AG04449 (cell line): ENCODE measurements at regions of chr10 and their contacts with region 1.

Region 1: DNA sequence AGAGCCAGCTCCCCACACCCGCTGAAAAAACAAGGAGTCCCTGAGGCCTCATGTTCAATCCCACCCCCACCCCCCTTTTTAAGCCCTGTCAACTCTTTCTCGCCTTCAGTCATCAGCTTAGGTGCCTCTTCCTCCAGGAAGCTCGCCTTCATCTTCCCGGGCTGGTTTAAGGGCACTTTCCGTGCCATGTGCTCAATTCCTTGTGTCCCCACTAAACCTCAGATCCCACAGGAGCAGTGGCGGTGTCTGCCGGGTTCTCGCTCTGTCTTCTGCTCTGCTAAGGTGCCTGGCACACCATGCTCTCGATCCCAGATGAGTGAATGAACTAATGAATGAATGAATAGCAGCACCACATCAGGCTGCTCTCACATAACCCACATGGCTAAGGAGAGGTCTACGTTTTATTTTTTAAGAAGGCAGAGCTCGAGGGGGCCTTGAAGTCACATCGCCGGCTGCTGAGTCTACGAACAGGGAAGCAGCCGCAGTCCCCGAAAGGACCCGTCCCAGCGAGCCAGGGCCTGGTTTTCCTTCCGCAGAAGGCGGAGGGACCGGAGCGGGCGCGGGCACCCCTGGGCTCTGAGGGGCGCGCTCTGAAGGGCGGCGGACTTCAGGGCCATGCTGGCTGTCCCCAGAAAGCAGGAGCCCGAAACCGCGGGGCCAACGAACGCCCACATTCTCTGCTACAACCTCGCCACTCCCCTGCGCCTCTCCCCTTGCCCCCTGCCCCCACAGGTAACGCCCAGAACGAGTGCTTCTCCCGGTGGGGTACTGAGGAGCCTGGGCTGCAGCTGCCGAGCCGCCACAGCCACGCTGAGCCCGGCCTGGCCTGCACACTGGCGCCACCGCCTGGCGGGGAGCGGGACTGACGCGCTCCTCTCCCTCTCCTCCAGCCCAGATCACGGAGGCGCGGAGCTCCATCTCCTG is 73.4 kb upstream of the KCNMA1 start:
- DNase-seq: no peak
- H3K4me3 ChIP-seq: peak overlapping the region; percentile 52
- CTCF ChIP-seq: peak; percentile 100

Region 2: GRCh38 chr10:77428691-77429395 is 282.2 kb before region 1 on chr10:
- CTCF ChIA-PET with region 1: interaction called, 10 read pairs
- POLR2A ChIA-PET with region 1: no interaction called
- DNase-seq: peak; percentile 51
- H3K4me3 ChIP-seq: no peak overlapping the region
- CTCF ChIP-seq: peak; percentile 87

Region 3: GRCh38 chr10:77661100-77661499 is 49.9 kb before region 1 on chr10:
- CTCF ChIA-PET with region 1: interaction called, 13 read pairs
- POLR2A ChIA-PET with region 1: no interaction called
- DNase-seq: no peak
- H3K4me3 ChIP-seq: no peak overlapping the region
- CTCF ChIP-seq: no peak

Region 4: GRCh38 chr10:77692782-77693181 is 18.2 kb before region 1 on chr10:
- CTCF ChIA-PET with region 1: interaction called, 146 read pairs
- POLR2A ChIA-PET with region 1: no interaction called
- DNase-seq: peak; percentile 38
- H3K4me3 ChIP-seq: no peak overlapping the region
- CTCF ChIP-seq: peak; percentile 5

Region 5: DNA sequence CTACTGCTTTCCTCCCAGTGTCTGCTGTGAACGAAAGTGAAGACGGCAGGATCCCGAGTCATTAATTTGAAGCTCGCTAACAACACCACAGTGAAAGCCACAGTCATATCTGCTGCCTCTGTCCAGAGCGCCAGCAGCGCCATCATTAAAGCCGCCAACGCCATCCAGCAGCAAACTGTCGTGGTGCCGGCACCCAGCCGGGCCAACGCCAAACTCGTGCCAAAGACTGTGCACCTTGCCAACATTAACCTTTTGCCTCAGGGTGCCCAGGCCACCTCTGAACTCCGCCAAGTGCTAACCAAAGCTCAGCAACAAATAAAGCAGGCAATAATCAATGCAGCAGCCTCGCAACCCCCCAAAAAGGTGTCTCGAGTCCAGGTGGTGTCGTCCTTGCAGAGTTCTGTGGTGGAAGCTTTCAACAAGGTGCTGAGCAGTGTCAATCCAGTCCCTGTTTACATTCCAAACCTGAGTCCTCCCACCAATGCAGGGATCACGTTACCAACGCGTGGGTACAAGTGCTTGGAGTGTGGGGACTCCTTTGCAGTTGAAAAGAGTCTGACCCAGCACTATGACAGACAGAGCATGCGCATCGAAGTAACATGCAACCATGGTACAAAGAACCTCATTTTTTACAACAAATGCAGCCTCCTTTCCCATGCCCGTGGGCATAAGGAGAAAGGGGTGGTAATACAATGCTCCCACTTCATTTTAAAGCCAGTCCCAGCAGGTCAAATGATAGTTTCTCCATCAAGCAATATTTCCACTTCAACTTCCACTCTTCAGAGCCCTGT is 21.4 kb after region 1 on chr10:
- CTCF ChIA-PET with region 1: interaction called, 17 read pairs
- POLR2A ChIA-PET with region 1: interaction called, 3 read pairs
- DNase-seq: no peak
- H3K4me3 ChIP-seq: no peak overlapping the region
- CTCF ChIP-seq: no peak

Region 6: GRCh38 chr10:77756319-77757232 is 45.6 kb after region 1 on chr10:
- CTCF ChIA-PET with region 1: interaction called, 83 read pairs
- POLR2A ChIA-PET with region 1: no interaction called
- DNase-seq: no peak
- H3K4me3 ChIP-seq: no peak overlapping the region
- CTCF ChIP-seq: peak; percentile 79

Region 7: DNA sequence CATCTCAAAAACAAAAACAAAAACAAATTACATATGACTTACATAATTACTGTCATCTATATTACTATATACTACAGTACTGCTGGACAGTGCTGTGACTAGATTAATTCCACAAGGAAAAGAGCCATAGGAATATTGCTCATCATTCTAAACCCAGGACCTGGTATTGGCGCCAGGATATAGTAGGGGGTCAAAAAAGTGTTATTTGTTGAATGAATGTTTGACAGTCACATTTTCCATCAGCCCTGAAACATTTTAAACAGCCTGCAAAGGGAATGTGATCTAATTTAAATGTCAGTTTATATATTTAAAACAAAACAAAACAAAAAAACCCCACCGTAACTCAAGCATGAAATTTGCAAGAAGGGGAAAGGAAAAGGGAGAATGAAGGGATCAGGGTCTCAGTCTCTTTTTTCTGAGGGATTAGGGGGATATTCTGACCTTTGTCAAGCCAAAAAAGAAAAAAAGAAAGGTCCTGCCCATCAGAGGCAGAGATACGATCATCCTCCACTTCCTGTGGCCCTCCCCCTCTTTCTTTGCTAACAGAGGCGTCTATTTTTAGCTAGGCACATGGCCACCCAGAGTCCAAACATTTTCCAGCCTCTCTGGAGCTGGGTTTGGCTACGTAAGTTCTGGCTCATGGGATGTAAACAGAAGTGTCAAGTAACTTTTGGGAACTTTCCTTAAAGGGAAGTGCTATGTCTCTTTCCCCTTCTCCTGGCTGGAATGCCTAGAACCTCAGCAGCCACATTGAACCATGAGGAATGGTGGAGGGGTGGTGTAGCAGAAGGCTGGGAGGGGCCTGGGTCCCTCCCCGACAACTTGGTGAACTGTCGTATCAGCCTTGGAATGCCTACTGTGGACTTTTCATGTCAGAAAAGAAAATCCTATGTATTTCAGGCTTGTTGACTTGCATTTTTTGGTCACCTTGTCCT is 260.1 kb after region 1 on chr10:
- CTCF ChIA-PET with region 1: no interaction called
- POLR2A ChIA-PET with region 1: no interaction called
- DNase-seq: peak; percentile 86
- H3K4me3 ChIP-seq: no peak overlapping the region; the same call in 1 of the 2 replicates
- CTCF ChIP-seq: no peak